ENCODE measurements at regions of chrX and their contacts with region 1.

Region 1: DNA sequence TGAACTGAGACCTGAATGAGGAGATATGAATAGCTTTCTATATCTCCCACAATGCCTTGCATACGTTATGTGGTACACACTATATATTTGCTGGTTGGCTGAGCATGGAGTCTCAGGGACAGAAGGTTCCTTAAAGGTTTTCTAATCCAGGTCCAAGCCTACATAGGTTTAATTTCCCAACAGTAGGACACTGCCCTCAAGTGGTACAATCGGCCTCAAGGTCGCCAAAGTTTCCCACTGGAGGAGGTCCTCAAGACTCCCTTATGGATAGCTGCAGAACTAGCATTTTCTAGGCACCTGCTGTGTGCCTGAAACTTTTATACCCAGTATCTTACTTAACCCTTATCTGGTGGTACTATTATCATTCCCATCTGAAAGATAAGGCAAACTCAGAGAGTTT is 21.0 kb upstream of the EFNB1 start:
- DNase-seq: peak; percentile 57
- H3K4me3 Mint-ChIP-seq: no peak overlapping the region
- H3K27ac Mint-ChIP-seq: no peak overlapping the region
- H3K4me1 Mint-ChIP-seq: no peaks in the 10 kb centered on the region
- H3K27me3 Mint-ChIP-seq: peaks cover 60% of the 10 kb centered on the region
- CTCF ChIP-seq: peak; percentile 42

Region 2: GRCh38 chrX:68183612-68184214 is 624.1 kb before region 1 on chrX:
- CTCF ChIA-PET with region 1: interaction called, 8 read pairs
- POLR2A ChIA-PET with region 1: no interaction called
- intact Hi-C with region 1: loop called (anchors 2 kb)
- DNase-seq: peak; percentile 53
- H3K4me3 Mint-ChIP-seq: no peak overlapping the region
- H3K27ac Mint-ChIP-seq: no peak overlapping the region
- H3K4me1 Mint-ChIP-seq: no peaks in the 10 kb centered on the region
- H3K27me3 Mint-ChIP-seq: peaks cover 22% of the 10 kb centered on the region
- CTCF ChIP-seq: peak; percentile 51

Region 3: GRCh38 chrX:68511255-68511654 is 296.6 kb before region 1 on chrX:
- CTCF ChIA-PET with region 1: interaction called, 14 read pairs
- POLR2A ChIA-PET with region 1: interaction called, 3 read pairs
- intact Hi-C with region 1: loop called (anchors 1 kb)
- DNase-seq: peak; percentile 68
- H3K4me3 Mint-ChIP-seq: no peak overlapping the region
- H3K27ac Mint-ChIP-seq: no peak overlapping the region
- H3K4me1 Mint-ChIP-seq: no peaks in the 10 kb centered on the region
- H3K27me3 Mint-ChIP-seq: peaks cover 17% of the 10 kb centered on the region
- CTCF ChIP-seq: peak; percentile 81

Region 4: DNA sequence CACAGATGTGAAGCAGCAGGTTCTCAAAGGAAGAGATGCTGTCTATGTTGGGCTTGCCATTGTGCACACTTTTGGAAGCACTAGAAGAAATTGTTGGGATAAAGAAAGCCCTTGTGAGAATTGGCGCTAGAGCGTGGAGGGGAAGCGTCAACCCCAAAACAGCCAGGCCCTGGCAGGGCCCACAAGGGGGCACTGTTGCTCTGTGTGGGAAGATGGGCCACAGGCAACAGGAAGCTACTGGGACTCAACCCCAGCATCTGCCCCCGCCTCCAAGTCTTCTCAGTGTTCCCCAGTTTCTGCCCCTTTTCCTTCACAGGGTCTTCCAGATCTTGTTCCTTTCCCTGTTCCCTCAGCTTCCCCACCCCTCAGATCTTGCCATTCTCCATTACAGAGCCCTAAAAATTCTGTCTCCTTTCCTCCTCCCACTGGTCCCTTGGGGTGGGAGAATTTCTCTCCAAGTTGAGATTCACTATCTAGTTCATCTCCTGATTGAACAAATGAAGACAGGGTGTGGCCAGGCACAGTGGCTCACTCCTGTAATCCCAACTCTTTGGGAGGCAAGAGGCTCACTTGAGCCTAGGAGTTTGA is 74.8 kb before region 1 on chrX:
- CTCF ChIA-PET with region 1: interaction called, 10 read pairs
- POLR2A ChIA-PET with region 1: interaction called, 3 read pairs
- intact Hi-C with region 1: loop called (anchors 1 kb)
- DNase-seq: peak; percentile 68
- H3K4me3 Mint-ChIP-seq: no peak overlapping the region
- H3K27ac Mint-ChIP-seq: no peak overlapping the region
- H3K4me1 Mint-ChIP-seq: no peaks in the 10 kb centered on the region
- H3K27me3 Mint-ChIP-seq: peaks cover 85% of the 10 kb centered on the region
- CTCF ChIP-seq: peak; percentile 80

Region 5: GRCh38 chrX:68822641-68823410 is 15.0 kb after region 1 on chrX:
- CTCF ChIA-PET with region 1: interaction called, 19 read pairs
- POLR2A ChIA-PET with region 1: interaction called, 3 read pairs
- intact Hi-C with region 1: no loop called
- DNase-seq: peak; percentile 65
- H3K4me3 Mint-ChIP-seq: no peak overlapping the region
- H3K27ac Mint-ChIP-seq: no peak overlapping the region
- H3K4me1 Mint-ChIP-seq: peaks cover 11% of the 10 kb centered on the region
- H3K27me3 Mint-ChIP-seq: peaks cover 40% of the 10 kb centered on the region
- CTCF ChIP-seq: peak; percentile 76

Region 6: GRCh38 chrX:69357317-69357716 is 549.5 kb after region 1 on chrX:
- CTCF ChIA-PET with region 1: no interaction called
- POLR2A ChIA-PET with region 1: no interaction called
- intact Hi-C with region 1: no loop called
- DNase-seq: no peak
- H3K4me3 Mint-ChIP-seq: no peak overlapping the region
- H3K27ac Mint-ChIP-seq: no peak overlapping the region
- H3K4me1 Mint-ChIP-seq: no peaks in the 10 kb centered on the region
- H3K27me3 Mint-ChIP-seq: peaks cover 18% of the 10 kb centered on the region
- CTCF ChIP-seq: no peak